ENCODE measurements at regions of chr5 and their contacts with region 1.

Region 1: DNA sequence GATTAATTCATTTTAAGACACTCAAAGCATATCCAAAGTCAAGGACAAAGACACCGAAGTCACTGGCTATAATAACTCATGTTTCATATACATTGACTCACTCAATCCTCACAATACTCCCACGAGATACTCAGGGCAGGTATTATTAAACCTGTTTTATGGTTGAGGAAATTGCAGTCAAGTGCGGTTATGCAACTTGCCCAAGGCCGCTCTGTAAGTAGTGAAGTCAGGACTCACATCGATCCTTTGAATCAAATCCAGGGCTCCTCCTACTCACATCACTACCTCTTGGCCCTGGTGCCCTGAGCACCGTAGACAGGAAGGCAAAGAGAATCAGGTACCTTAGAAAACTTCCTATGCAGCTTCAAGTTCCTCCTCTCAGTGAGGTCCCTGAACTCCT is 87.8 kb upstream of the APC start:
- DNase-seq: no peak

Region 2: GRCh38 chr5:112833971-112834370 is 184.1 kb after region 1 on chr5:
- intact Hi-C with region 1: no loop called
- DNase-seq: no peak

Region 3: DNA sequence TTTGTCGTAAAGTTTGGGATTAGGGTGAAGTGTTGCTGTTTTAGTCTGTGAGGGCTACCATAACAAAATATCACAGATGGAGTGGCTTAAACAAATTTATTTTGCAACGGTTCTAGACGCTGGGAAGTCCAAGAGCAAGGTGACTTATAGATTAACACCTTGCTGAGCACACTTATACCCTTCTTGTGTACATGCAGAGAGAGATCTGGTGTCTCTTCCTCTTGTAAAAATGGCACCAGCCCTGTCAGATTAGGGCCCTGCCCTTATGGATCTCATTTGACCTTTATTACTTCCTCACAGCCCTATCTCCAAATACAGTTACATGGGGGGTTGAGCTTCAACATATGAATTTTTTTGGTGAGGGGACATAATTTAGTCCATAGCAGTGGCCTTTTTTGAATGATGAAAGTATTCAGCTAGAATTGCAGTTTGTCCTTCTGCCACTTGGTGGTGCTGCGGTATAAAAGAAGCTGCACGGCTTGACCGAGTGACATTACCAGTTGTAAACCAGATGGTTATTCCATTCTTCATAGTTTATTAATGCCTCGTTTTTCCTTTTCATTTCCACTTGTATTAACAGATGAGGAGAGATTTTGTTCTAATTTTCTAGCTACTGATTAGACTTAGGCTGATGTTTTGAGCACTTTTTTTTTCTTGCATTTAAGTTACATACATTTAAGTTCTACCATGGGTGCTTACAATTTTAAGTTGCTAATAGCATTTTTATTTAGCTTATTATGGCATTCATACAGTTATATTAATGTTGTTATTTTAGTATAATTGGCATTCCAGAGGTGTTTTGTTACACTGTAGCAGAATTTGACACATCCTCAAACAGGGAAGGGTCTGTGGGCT is 346.1 kb after region 1 on chr5:
- intact Hi-C with region 1: no loop called
- DNase-seq: peak; percentile 86

Region 4: GRCh38 chr5:113552137-113552536 is 902.3 kb after region 1 on chr5:
- intact Hi-C with region 1: loop called in 1 of 2 experiments (anchors 5 kb)
- DNase-seq: no peak